B cell (primary cell): ENCODE measurements at regions of chr1 and their contacts with region 1.

Region 1: DNA sequence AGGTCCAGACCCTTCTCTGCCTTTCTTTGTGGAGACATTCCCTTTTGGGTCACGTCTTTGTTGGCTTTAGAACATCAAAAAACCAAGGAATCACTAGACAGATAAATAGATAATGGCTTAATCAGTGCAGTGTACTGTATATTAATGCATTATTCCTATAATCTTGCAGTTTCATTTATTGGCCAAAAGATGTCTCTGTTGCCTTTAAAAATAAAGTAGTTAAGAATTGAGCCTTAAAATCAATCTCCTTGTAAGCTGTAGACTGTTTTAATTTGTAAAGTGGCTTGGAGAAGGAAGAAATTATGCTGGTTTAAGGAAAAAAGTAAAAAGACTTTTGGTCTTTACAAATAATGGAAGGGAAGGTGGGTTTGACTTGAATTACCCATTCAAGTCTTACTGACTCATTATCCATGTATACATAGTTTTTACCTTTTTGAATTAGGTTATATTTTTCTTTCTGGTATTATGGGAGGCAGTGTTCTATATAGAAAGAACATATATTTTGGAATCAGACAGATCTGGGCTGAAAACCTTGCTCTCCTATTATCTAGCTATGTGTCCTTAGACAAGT is 84.6 kb downstream of the VPS13D start:
- DNase-seq: peak; percentile 23
- ATAC-seq: no peak
- H3K4me3 ChIP-seq: no peak overlapping the region
- H3K4me3 Mint-ChIP-seq: no peak overlapping the region
- H3K27ac ChIP-seq: no peak overlapping the region
- H3K27ac Mint-ChIP-seq: no peak overlapping the region
- H3K4me1 ChIP-seq: no peaks in the 10 kb centered on the region
- H3K4me1 Mint-ChIP-seq: no peaks in the 10 kb centered on the region
- H3K27me3 ChIP-seq: no peaks in the 10 kb centered on the region
- H3K27me3 Mint-ChIP-seq: no peaks in the 10 kb centered on the region
- CTCF ChIP-seq: peak; percentile 61

Region 2: GRCh38 chr1:11072216-11072917 is 1242.1 kb before region 1 on chr1:
- CTCF ChIA-PET with region 1: no interaction called
- POLR2A ChIA-PET with region 1: no interaction called
- intact Hi-C with region 1: no loop called
- DNase-seq: no peak
- ATAC-seq: no peak
- H3K4me3 ChIP-seq: no peak overlapping the region
- H3K4me3 Mint-ChIP-seq: no peak overlapping the region
- H3K27ac ChIP-seq: no peak overlapping the region
- H3K27ac Mint-ChIP-seq: no peak overlapping the region
- H3K4me1 ChIP-seq: no peaks in the 10 kb centered on the region
- H3K4me1 Mint-ChIP-seq: peaks cover 4% of the 10 kb centered on the region
- H3K27me3 ChIP-seq: no peaks in the 10 kb centered on the region
- H3K27me3 Mint-ChIP-seq: no peaks in the 10 kb centered on the region
- CTCF ChIP-seq: no peak

Region 3: GRCh38 chr1:11907275-11908094 is 406.9 kb before region 1 on chr1:
- CTCF ChIA-PET with region 1: no interaction called
- POLR2A ChIA-PET with region 1: no interaction called
- intact Hi-C with region 1: no loop called
- DNase-seq: peak; percentile 95
- ATAC-seq: peak; percentile 55
- H3K4me3 ChIP-seq: peak overlapping the region; percentile 77 to 85 (median 83)
- H3K4me3 Mint-ChIP-seq: peak overlapping the region; percentile 95
- H3K27ac ChIP-seq: peak overlapping the region; percentile 99 to 100
- H3K27ac Mint-ChIP-seq: peak overlapping the region; percentile 99
- H3K4me1 ChIP-seq: peaks cover 3 to 11% of the 10 kb centered on the region in 2 donors
- H3K4me1 Mint-ChIP-seq: peaks cover 28% of the 10 kb centered on the region
- H3K27me3 ChIP-seq: no peaks in the 10 kb centered on the region
- H3K27me3 Mint-ChIP-seq: no peaks in the 10 kb centered on the region
- CTCF ChIP-seq: peak; percentile 80

Region 4: DNA sequence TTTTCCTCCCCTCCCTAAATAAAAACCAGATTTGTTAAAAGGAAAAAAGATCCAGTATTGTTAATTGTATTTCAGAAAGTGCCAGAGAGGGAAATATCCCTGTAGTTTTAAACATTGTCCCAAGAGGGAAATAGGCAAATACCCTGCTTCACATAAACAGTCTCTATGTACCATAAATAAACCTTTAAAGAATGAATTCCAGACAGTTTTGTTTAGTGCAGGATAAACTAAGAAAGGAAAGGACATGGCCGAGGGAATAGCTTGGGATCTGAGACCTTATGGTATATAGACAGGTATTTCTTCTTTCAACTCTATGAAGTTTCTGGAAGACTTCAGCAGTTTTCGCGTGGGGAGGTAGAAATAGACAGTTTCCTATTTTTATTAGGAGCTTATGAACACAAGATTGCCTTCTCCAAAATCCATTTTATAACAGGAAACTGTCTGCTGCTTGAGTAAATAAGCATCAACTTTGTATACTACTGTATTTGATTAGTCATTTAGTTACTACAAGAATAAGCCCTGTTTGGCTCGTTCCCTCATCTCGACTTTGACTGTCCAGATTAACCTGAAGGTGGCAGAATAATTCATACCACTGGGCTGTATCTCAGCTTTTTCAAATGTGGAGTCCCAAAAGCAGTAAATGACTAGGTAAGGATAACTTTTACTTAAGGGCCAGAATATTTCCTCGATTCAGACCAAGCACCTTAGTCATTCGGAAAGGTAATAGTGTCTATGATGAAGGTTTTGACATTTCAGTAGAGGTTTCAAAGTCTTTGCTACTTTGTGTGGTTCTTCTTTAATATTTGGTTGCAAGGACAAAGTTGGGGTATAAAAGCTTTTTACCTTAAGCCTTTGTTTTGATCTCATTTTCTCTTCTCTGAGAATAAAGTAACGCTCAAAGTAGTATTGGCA is 92.9 kb after region 1 on chr1:
- CTCF ChIA-PET with region 1: no interaction called
- POLR2A ChIA-PET with region 1: interaction called, 11 read pairs
- intact Hi-C with region 1: no loop called
- DNase-seq: no peak
- ATAC-seq: no peak
- H3K4me3 ChIP-seq: no peak overlapping the region
- H3K4me3 Mint-ChIP-seq: no peak overlapping the region
- H3K27ac ChIP-seq: no peak overlapping the region
- H3K27ac Mint-ChIP-seq: no peak overlapping the region
- H3K4me1 ChIP-seq: no peaks in the 10 kb centered on the region
- H3K4me1 Mint-ChIP-seq: peaks cover 2% of the 10 kb centered on the region
- H3K27me3 ChIP-seq: no peaks in the 10 kb centered on the region
- H3K27me3 Mint-ChIP-seq: no peaks in the 10 kb centered on the region
- CTCF ChIP-seq: no peak

Region 5: DNA sequence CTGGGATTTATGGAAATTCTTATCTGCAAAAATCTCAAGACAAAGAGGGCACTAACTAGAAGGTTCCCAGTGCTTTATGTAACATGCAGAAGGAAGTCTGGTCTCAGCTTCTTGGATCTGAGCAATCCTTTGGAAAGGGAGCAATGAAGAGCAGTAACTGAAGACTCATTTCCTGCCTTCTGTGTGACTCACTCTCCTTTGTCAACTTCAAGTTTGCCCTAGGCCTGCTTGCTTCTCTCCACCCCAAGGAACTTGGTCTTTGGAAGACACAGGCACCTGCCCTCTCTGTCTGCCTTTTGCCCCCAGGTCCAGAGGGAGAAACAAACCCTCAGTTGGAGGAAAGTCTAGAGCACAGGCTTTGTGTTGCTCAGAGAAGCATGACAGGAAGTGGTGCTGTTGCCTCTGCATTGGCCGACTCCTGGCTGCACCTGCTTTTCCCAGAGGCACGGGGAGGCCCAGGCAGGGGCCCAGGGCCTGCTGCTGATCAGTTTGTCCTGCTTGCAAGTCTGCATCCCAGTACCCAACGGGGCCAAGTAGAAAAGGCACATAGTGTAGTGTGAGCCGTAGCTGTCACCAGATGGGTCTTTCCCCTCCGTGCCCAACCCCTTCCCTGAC is 166.4 kb after region 1 on chr1:
- CTCF ChIA-PET with region 1: no interaction called
- POLR2A ChIA-PET with region 1: no interaction called
- intact Hi-C with region 1: no loop called
- DNase-seq: peak; percentile 20
- ATAC-seq: no peak
- H3K4me3 ChIP-seq: no peak overlapping the region
- H3K4me3 Mint-ChIP-seq: no peak overlapping the region
- H3K27ac ChIP-seq: peak overlapping the region in 1 of 2 donors; percentile 41
- H3K27ac Mint-ChIP-seq: peak overlapping the region; percentile 74
- H3K4me1 ChIP-seq: peaks cover 61 to 64% of the 10 kb centered on the region in 2 donors
- H3K4me1 Mint-ChIP-seq: peaks cover 55% of the 10 kb centered on the region
- H3K27me3 ChIP-seq: no peaks in the 10 kb centered on the region
- H3K27me3 Mint-ChIP-seq: no peaks in the 10 kb centered on the region
- CTCF ChIP-seq: no peak

Region 6: GRCh38 chr1:12619792-12620487 is 305.5 kb after region 1 on chr1:
- CTCF ChIA-PET with region 1: interaction called, 50 read pairs
- POLR2A ChIA-PET with region 1: no interaction called
- intact Hi-C with region 1: loop called (anchors 1 kb)
- DNase-seq: peak; percentile 77
- ATAC-seq: peak; percentile 76
- H3K4me3 ChIP-seq: peak overlapping the region in 3 of 5 experiments; percentile 57 to 71 (median 60)
- H3K4me3 Mint-ChIP-seq: peak overlapping the region; percentile 86
- H3K27ac ChIP-seq: no peak overlapping the region
- H3K27ac Mint-ChIP-seq: no peak overlapping the region
- H3K4me1 ChIP-seq: peaks cover 29 to 46% of the 10 kb centered on the region in 2 donors
- H3K4me1 Mint-ChIP-seq: peaks cover 42% of the 10 kb centered on the region
- H3K27me3 ChIP-seq: peaks cover 0 to 50% (median 11%) of the 10 kb centered on the region in 4 experiments
- H3K27me3 Mint-ChIP-seq: peaks cover 54% of the 10 kb centered on the region
- CTCF ChIP-seq: peak; percentile 97

Region 7: DNA sequence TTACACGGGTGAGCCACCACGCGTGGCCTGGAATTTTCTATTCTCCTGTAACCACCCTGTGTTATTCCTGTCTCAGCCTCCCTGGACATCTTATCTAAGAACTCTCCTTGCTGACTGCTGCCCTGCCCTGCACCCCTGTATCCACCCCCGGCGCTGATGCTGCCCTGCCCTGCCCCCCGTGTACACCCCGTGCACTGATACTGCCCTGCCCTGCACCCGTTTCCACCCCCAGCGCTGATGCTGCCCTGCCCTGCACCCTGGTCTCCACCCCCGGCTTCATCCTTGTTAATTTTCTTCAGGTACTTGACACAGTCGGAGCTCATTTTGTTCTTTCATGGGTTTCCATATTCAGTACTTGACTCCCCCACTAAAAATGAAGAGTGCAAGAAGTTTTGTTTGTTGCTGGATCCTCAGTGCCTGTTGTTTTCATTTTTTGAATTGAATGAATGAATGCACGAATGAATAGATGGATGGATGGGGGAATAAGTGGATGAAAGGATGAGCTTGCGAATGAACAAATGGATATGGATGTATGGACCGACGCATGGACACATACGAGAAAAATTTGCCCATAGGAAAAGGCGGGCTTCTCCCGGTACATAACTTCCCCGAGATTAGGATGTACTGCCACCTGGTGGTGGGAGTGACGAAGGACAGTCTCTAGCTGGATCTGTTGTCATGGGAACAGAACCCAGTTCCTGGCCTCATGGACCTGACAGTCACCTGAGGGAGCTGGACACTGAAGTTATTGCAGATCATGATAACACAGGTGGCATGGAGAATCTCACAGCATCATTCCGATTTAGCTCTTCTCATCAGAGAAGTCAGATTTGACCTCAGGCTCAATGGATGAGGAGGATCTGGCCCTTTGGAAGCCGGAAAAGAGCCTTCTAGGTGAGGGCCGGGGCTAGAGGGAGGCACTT is 344.4 kb after region 1 on chr1:
- CTCF ChIA-PET with region 1: interaction called, 7 read pairs
- POLR2A ChIA-PET with region 1: no interaction called
- intact Hi-C with region 1: loop called (anchors 1 kb)
- DNase-seq: peak; percentile 72
- ATAC-seq: peak; percentile 65
- H3K4me3 ChIP-seq: no peak overlapping the region
- H3K4me3 Mint-ChIP-seq: no peak overlapping the region
- H3K27ac ChIP-seq: no peak overlapping the region
- H3K27ac Mint-ChIP-seq: no peak overlapping the region
- H3K4me1 ChIP-seq: peaks cover 4 to 5% of the 10 kb centered on the region in 2 donors
- H3K4me1 Mint-ChIP-seq: peaks cover 3% of the 10 kb centered on the region
- H3K27me3 ChIP-seq: peaks cover 0 to 4% (median 1%) of the 10 kb centered on the region in 4 experiments
- H3K27me3 Mint-ChIP-seq: peaks cover 12% of the 10 kb centered on the region
- CTCF ChIP-seq: peak; percentile 87